ENCODE measurements at regions of chr5 and their contacts with region 1.

Region 1: DNA sequence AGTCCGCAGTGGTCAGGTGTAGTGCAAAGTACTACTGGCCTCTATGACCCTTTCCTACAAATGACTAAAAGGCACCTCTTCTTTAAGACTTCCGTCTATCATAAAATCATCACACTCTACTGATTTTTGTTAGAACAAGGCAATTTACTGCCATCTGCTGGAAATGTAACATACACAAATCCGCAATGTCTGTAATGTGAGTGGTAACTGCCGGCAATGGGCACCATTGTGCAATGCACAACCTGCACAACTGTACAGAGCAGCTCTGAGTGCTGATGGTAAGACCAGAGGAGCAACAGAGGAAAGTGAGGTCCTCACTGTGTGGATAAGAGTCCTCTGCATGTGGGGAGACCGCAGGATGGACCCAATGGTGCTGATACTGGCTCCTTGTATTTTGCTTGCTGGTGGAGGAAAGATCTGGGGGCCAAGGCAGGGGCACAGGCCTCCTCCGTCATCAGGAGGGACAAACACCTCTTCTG is 103.7 kb downstream of the ATPSCKMT start:
- DNase-seq: peak; percentile 18 to 66
- ATAC-seq: peak; percentile 87 to 96
- H3K4me3 ChIP-seq: no peak overlapping the region
- H3K27ac ChIP-seq: no peak overlapping the region
- H3K4me1 ChIP-seq: no peaks in the 10 kb centered on the region
- CTCF ChIP-seq: peak; percentile 61
- EP300 ChIP-seq: no peak
- POLR2A ChIP-seq: no peak
- RAD21 ChIP-seq: peak; percentile 69 to 76

Region 2: DNA sequence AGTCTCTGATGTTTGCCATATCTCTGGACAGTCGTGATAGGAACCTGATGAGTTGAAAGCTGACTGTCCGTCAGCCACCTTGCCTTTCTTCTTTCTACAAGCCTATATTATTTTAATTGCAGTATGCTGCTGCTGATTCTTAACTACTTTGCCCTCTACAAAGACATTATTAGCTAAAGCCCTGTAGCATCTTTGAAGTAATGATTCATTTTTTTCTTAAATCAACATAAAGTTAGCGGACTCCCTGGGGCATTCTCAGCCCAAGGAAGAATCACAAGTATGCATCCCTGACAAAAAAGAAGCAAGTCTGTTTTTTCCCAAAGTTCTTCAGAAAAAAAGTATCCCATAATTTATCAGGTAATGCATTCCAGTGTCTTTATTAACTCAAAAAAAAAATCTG is 446.3 kb before region 1 on chr5:
- CTCF ChIA-PET with region 1: no interaction called
- POLR2A ChIA-PET with region 1: no interaction called
- DNase-seq: no peak
- ATAC-seq: no peak
- H3K4me3 ChIP-seq: no peak overlapping the region
- H3K27ac ChIP-seq: no peak overlapping the region
- H3K4me1 ChIP-seq: no peaks in the 10 kb centered on the region
- CTCF ChIP-seq: no peak
- EP300 ChIP-seq: no peak
- POLR2A ChIP-seq: no peak
- RAD21 ChIP-seq: no peak

Region 3: DNA sequence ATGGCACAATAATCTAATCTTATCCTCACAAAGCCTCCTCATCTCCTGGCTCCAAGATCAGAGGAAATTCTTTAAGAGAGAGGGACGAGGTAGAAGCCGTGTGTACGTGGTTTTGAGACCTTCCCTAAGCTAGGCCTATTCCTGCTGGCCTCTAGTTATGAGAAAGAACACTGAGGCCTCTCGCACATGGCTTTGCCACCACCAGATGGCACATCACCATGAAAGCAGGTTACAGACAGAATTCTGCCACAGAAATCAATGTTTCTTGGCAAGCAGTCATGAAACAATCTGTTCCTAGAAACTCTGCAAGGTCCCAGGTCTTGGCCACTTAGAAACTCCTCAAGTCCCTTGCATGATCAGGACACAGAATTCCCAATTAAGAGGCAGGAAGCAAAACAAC is 247.6 kb before region 1 on chr5:
- CTCF ChIA-PET with region 1: interaction called, 19 read pairs
- POLR2A ChIA-PET with region 1: no interaction called
- DNase-seq: peak; percentile 8 to 35
- ATAC-seq: peak; percentile 80 to 84; a peak in 5 of 6 replicates
- H3K4me3 ChIP-seq: no peak overlapping the region
- H3K27ac ChIP-seq: no peak overlapping the region
- H3K4me1 ChIP-seq: no peaks in the 10 kb centered on the region
- CTCF ChIP-seq: peak; percentile 36
- EP300 ChIP-seq: no peak
- POLR2A ChIP-seq: no peak
- RAD21 ChIP-seq: peak; percentile 33 to 49; a peak in 4 of 5 replicates

Region 4: DNA sequence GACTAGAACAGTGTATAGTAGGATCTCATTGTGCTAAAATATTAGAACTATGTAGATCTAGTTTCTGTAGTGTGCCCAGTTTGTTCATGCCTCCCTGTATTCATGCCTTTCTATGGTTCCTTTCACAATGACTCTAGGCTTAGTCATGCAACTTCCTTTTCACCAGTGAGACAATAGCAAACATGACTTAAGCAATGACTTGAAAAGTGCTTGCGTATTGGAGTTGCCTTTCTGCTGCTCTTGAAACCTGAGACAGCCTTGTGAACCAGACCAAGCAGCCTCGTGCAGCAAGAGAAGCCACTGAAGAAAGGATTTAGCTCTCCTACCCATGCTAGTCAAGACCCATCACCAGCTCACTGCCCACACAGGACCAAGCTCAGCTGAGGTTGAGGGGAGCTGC is 221.3 kb before region 1 on chr5:
- CTCF ChIA-PET with region 1: no interaction called
- POLR2A ChIA-PET with region 1: no interaction called
- DNase-seq: peak; percentile 29 to 73
- ATAC-seq: peak; percentile 91 to 97
- H3K4me3 ChIP-seq: no peak overlapping the region
- H3K27ac ChIP-seq: peak overlapping the region; percentile 43 to 73; a peak in 3 of 6 replicates
- H3K4me1 ChIP-seq: 0 out of 3 replicates have a peak, but pooled peaks cover 7% of the 10 kb centered on the region
- CTCF ChIP-seq: no peak
- EP300 ChIP-seq: no peak
- POLR2A ChIP-seq: no peak
- RAD21 ChIP-seq: no peak

Region 5: GRCh38 chr5:10173716-10174115 is 27.8 kb after region 1 on chr5:
- CTCF ChIA-PET with region 1: no interaction called
- POLR2A ChIA-PET with region 1: no interaction called
- DNase-seq: no peak
- ATAC-seq: no peak
- H3K4me3 ChIP-seq: no peak overlapping the region
- H3K27ac ChIP-seq: no peak overlapping the region
- H3K4me1 ChIP-seq: no peaks in the 10 kb centered on the region
- CTCF ChIP-seq: no peak
- EP300 ChIP-seq: no peak
- POLR2A ChIP-seq: no peak
- RAD21 ChIP-seq: no peak